Adrenal gland (tissue), 19 donors: ENCODE measurements at regions of chr20 and their contacts with region 1.

Region 1: DNA sequence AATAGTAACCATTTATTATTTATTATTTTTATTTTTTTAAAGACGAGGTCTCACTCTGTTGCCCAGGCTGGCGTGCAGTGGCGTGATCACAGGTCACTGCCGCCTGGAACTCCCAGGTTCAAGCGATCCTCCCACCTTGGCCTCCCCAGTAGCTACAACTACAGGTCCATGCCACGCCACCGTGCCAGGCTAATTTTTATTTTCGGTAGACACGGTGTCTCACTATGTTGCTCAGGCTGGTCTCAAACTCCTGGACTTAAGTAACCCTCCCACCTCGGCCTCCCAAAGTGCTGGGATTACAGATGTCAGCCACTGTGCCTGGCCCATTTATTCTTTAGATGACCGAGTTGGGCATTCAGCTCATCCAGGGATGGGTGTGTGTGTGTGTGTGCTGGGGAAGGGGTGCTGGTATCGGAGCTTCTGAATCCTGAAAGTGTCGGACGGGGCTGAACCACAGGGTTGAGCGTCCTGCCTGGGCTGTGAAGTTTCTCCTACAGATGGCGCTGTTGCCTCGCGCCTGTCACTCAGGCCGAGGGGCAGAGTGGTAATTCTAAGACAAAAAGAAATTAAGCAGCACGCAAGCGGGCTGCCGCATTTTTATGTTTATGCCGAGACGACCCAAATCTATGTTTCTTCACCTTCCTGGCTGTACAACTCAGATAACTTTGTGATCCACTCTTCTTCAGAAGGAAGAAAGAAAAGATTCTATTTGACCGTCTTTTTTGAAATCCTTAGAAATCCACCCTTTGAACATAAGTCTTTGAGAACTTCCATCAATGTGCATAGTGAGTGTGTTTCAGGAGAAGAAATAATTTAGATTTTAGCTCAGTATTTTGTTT is 252.8 kb downstream of the CDH26 start:
- DNase-seq: peak; percentile 45 to 82 (median 70)
- H3K4me3 ChIP-seq: no peak overlapping the region
- H3K27ac ChIP-seq: no peak overlapping the region
- H3K4me1 ChIP-seq: no peaks in the 10 kb centered on the region
- H3K27me3 ChIP-seq: no peaks in the 10 kb centered on the region
- CTCF ChIP-seq: peak; percentile 84 to 94 (median 88)
- POLR2A ChIP-seq: no peak

Region 2: GRCh38 chr20:60262967-60263603 is 52.1 kb after region 1 on chr20:
- intact Hi-C with region 1: loop called in 1 of 2 experiments (anchors 2 kb)
- DNase-seq: peak in 6 of 7 donors; percentile 26 to 61 (median 38)
- H3K4me3 ChIP-seq: no peak overlapping the region
- H3K27ac ChIP-seq: no peak overlapping the region
- H3K4me1 ChIP-seq: no peaks in the 10 kb centered on the region
- H3K27me3 ChIP-seq: no peaks in the 10 kb centered on the region
- CTCF ChIP-seq: peak; percentile 50 to 73 (median 64)
- POLR2A ChIP-seq: no peak

Region 3: GRCh38 chr20:60365056-60365666 is 154.2 kb after region 1 on chr20:
- intact Hi-C with region 1: no loop called
- DNase-seq: no peak
- H3K4me3 ChIP-seq: no peak overlapping the region
- H3K27ac ChIP-seq: no peak overlapping the region
- H3K4me1 ChIP-seq: no peaks in the 10 kb centered on the region
- H3K27me3 ChIP-seq: no peaks in the 10 kb centered on the region
- CTCF ChIP-seq: no peak
- POLR2A ChIP-seq: no peak

Region 4: GRCh38 chr20:61120595-61121515 is 909.9 kb after region 1 on chr20:
- intact Hi-C with region 1: loop called in 1 of 2 experiments (anchors 10 kb)
- DNase-seq: peak; percentile 20 to 64 (median 48)
- H3K4me3 ChIP-seq: no peak overlapping the region
- H3K27ac ChIP-seq: no peak overlapping the region
- H3K4me1 ChIP-seq: no peaks in the 10 kb centered on the region
- H3K27me3 ChIP-seq: no peaks in the 10 kb centered on the region
- CTCF ChIP-seq: peak; percentile 17 to 57 (median 48)
- POLR2A ChIP-seq: no peak

Region 5: DNA sequence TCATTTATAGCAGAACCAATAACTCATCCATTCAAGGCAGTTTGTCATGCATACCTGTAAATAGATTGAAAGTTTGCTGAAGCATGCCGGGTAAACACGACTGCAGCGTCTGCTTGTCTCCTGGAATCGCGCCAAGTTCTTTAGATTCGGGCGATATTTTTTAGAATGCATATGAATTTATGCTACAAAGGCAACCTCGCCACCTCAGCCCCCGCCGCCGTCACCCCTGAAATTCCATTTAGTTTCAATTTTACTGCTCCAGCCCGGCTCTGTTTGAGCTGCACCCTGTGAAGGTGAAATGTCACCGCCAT is 1023.8 kb after region 1 on chr20:
- intact Hi-C with region 1: loop called in 1 of 2 experiments (anchors 10 kb)
- DNase-seq: no peak
- H3K4me3 ChIP-seq: no peak overlapping the region
- H3K27ac ChIP-seq: no peak overlapping the region
- H3K4me1 ChIP-seq: no peaks in the 10 kb centered on the region
- H3K27me3 ChIP-seq: no peaks in the 10 kb centered on the region
- CTCF ChIP-seq: no peak
- POLR2A ChIP-seq: no peak